ENCODE measurements at regions of chr2 and their contacts with region 1.

Region 1: GRCh38 chr2:45267062-45267792 is 258.0 kb upstream of the SIX2 start:
- DNase-seq: peak; percentile 51
- ATAC-seq: no peak
- H3K4me3 ChIP-seq: no peak overlapping the region
- H3K27ac ChIP-seq: peak overlapping the region; percentile 26; the same call in 1 of the 2 replicates
- H3K4me1 ChIP-seq: peaks cover 33% of the 10 kb centered on the region
- H3K27me3 ChIP-seq: no peaks in the 10 kb centered on the region
- CTCF ChIP-seq: no peak

Region 2: GRCh38 chr2:45177870-45178269 is 89.4 kb before region 1 on chr2:
- CTCF ChIA-PET with region 1: no interaction called
- POLR2A ChIA-PET with region 1: no interaction called
- intact Hi-C with region 1: no loop called
- DNase-seq: peak; percentile 94
- ATAC-seq: 0 out of 2 replicates have a peak, but pooled peaks have one; percentile 8
- H3K4me3 ChIP-seq: no peak overlapping the region
- H3K27ac ChIP-seq: peak overlapping the region; percentile 95
- H3K4me1 ChIP-seq: peaks cover 54% of the 10 kb centered on the region
- H3K27me3 ChIP-seq: no peaks in the 10 kb centered on the region
- CTCF ChIP-seq: no peak

Region 3: GRCh38 chr2:45412754-45413379 is 145.6 kb after region 1 on chr2:
- CTCF ChIA-PET with region 1: no interaction called
- POLR2A ChIA-PET with region 1: interaction called, 22 read pairs
- intact Hi-C with region 1: no loop called
- DNase-seq: no peak
- ATAC-seq: peak; percentile 71
- H3K4me3 ChIP-seq: no peak overlapping the region
- H3K27ac ChIP-seq: no peak overlapping the region
- H3K4me1 ChIP-seq: no peaks in the 10 kb centered on the region
- H3K27me3 ChIP-seq: no peaks in the 10 kb centered on the region
- CTCF ChIP-seq: no peak